ENCODE measurements at regions of chr11 and their contacts with region 1.

Region 1: GRCh38 chr11:75022759-75023396 is 34.1 kb downstream of the NEU3 start:
- DNase-seq: peak; percentile 80
- H3K4me3 ChIP-seq: no peak overlapping the region
- H3K27ac ChIP-seq: no peak overlapping the region
- H3K4me1 ChIP-seq: no peaks in the 10 kb centered on the region
- CTCF ChIP-seq: peak; percentile 98

Region 2: DNA sequence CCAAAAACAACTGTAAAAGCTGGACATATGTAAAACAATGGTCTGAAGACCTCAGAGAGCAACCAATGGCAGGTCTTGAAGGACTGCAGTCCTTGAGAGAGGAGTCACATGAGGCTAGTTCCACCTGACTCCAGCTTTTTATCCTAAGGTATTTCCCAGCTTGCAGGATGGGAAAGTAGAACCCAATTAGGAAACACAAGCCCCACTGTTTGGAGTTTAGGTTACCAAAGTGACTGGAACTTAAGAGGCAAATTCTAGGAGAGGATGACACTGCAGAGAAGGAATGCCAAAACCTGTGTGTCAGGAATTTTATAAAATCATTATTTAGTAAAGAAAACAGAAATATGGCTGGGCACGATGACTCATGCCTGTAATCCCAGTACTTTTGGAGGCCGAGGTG is 55.4 kb after region 1 on chr11:
- CTCF ChIA-PET with region 1: no interaction called
- POLR2A ChIA-PET with region 1: no interaction called
- intact Hi-C with region 1: loop called (anchors 1 kb)
- DNase-seq: no peak
- H3K4me3 ChIP-seq: no peak overlapping the region
- H3K27ac ChIP-seq: no peak overlapping the region
- H3K4me1 ChIP-seq: no peaks in the 10 kb centered on the region
- CTCF ChIP-seq: no peak

Region 3: DNA sequence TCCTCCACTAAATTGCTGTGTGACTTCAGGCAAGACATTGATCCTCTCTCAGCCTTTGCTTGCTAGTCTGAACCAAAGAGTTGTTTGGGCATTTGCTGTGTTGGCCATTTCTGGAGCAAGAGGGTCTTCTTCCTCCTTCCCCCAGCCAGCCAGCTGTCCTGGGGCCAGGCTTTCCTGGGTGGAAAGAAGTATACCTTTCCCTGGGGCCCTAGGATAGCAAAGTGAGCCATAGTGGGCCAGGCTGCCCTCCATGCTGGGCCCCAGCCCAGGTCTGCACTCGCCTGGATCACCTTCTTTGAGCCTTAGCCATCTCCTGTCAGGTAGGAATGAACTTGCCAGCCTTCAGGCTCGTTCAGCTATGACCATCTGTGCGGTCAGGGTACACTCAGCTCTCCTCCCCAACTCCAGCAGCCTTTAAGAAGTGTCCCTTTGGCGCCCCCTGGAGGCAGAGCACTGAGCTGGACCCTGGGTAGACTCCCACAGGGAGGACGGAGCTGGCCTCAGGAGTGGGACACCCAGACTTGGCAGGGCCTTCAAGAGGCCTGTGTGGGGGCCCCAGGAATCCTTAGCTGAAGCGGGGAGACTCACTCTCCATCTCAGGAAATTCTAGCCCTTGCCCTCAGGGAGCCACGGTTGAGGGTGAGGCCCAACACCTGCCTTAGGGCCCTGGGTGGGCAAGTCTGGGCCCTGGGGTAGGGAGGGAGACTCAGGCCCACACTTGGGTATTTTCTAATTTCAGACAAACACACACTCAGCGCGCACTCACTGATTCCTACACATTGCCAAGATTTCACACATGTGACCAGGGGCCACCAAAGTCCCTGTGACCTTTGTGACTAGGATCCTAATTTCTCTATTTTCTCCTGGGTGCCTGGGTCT is 182.0 kb after region 1 on chr11:
- CTCF ChIA-PET with region 1: interaction called, 9 read pairs
- POLR2A ChIA-PET with region 1: no interaction called
- intact Hi-C with region 1: loop called (anchors 1 kb)
- DNase-seq: peak; percentile 82
- H3K4me3 ChIP-seq: no peak overlapping the region
- H3K27ac ChIP-seq: no peak overlapping the region
- H3K4me1 ChIP-seq: peaks cover 8% of the 10 kb centered on the region
- CTCF ChIP-seq: peak; percentile 95